BJ (cell line): ENCODE measurements at regions of chr7 and their contacts with region 1.

Region 1: DNA sequence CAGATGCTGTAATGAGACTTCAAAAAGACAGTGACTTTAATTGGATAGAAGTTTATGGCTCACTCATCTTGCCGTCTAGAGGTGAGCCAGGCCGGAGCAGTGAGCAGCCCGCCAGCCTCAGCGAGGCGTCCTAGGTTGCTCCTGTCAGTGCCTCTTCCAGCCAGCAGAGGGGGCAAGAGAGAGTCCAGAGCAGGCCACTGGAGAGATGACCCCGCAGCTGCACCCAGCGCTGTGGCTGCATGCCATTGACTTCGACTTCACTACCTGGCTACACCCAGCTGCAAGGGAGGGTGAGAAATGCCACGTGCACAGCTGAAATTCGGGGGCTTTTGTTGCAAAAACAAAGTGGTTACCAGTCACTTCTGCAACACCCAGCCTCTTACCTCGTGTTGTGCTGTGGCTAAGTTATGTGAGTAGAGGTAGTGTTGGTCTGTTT is 26.5 kb downstream of the NUB1 start:
- DNase-seq: no peak
- H3K4me3 ChIP-seq: no peak overlapping the region
- H3K27me3 ChIP-seq: no peaks in the 10 kb centered on the region
- CTCF ChIP-seq: peak; percentile 98

Region 2: GRCh38 chr7:151436446-151437158 is 68.4 kb after region 1 on chr7:
- CTCF ChIA-PET with region 1: interaction called, 11 read pairs
- POLR2A ChIA-PET with region 1: no interaction called
- DNase-seq: peak; percentile 33
- H3K4me3 ChIP-seq: no peak overlapping the region
- H3K27me3 ChIP-seq: peaks cover 13% of the 10 kb centered on the region
- CTCF ChIP-seq: no peak

Region 3: DNA sequence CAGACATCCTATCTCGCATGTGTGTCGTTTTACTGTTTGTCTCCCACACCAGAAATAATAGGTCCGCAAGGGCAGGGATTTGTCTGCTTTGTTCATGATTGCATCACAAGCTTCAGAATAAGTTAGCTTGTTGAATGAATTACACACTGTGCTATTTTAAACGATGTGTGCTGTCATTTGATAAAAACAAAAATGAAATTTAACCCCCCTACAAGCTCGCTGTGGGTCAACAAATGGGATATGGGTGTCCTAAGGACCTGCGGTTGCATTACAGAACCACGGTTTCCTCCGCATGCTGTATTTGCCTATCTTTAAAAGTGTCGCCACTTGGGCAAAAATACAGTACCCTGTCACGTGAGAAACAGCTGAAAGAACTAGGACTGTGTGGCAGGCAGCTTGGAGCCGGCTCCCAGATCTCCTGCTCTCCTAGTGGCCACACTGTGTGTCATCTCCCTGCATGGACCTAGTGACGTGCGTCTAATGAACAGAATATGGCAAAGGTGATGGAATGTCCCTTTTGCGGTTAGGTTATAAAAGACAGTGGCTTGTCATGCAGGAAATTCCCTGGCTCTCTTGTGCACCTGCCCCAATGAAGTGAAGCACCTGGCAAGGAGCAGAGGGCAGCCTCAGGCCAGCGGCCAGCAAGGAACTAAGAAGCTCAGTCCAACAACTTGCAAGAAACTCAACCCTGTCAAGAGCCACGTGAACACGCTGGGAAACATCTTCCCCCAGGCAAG is 104.7 kb after region 1 on chr7:
- CTCF ChIA-PET with region 1: no interaction called
- POLR2A ChIA-PET with region 1: no interaction called
- DNase-seq: no peak
- H3K4me3 ChIP-seq: no peak overlapping the region
- H3K27me3 ChIP-seq: no peaks in the 10 kb centered on the region
- CTCF ChIP-seq: no peak

Region 4: GRCh38 chr7:151515276-151515565 is 147.1 kb after region 1 on chr7:
- CTCF ChIA-PET with region 1: no interaction called
- POLR2A ChIA-PET with region 1: interaction called, 16 read pairs
- DNase-seq: no peak
- H3K4me3 ChIP-seq: no peak overlapping the region
- H3K27me3 ChIP-seq: no peaks in the 10 kb centered on the region
- CTCF ChIP-seq: no peak